ENCODE measurements at regions of chr16 and their contacts with region 1.

Region 1: DNA sequence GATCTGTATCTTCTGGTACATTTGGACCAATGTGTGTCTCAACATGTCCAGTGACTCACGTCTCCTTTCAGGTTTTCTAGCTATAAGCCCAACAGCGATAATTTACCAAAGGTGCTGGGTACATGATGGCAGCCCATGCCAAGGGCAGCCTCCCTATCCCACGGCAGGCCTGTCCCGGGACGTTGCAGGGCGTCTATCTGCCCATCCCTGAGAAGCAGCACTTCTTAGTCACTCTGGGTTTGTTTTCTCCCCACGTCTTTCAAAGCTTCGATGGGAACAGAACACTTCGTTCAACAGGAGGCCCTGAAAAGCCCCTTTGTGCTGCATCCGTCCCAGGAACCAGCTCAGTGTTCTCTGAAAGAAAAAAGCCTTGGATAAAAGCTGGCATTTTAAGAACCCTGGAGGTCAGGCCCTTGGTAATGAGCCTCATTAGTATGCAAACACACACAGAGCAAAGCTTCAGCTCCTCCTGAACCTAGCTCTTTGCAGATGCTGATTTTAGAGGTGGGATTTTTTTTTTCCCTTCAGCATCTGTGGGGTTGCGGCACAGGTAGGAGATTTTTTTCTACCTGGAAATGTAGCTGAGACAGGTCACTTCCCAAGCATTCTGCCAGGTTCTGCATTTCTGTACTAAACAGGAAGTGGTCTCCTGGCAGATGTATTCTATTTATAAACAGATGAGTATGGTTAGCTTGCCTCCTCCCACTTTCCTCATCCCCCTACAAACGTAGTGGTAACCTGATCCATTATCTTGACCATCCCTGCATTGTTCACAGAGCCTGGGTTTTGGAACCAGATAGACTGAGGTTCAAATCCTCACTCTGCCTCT is 17.5 kb upstream of the MT4 start:
- DNase-seq: peak; percentile 14 to 86 (median 74)
- H3K4me3 ChIP-seq: peak overlapping the region in 34 of 59 donors; percentile 3 to 46 (median 23)
- H3K27ac ChIP-seq: peak overlapping the region; percentile 85 to 100 (median 98)
- H3K27me3 ChIP-seq: no peaks in the 10 kb centered on the region
- CTCF ChIP-seq: peak in 3 of 56 donors; percentile 9 to 31 (median 17)

Region 2: DNA sequence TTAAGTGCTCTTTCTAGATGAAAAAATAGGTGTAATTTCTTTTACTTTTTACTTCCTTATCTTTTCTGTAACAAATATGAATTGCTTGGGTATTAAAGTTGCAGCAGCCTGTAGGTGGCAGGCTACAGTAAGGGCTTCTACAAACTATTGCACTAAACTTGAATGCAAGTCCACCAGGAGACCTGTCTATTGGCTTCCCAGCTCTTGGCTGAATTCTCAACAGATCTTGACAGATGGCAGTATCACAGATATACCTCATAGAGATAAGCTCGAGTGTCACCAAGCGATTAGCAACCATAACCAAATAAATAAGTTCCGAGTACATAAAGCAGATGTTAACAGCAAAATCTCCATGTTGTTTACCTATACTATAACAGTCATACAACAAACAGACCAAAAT is 33.4 kb before region 1 on chr16:
- intact Hi-C with region 1: loop called (anchors 1 to 2 kb)
- DNase-seq: peak in 5 of 10 donors; percentile 51 to 71 (median 59)
- H3K4me3 ChIP-seq: peak overlapping the region in 42 of 59 donors; percentile 5 to 100 (median 91)
- H3K27ac ChIP-seq: peak overlapping the region in 56 of 59 donors; percentile 20 to 100 (median 99)
- H3K27me3 ChIP-seq: no peaks in the 10 kb centered on the region
- CTCF ChIP-seq: peak; percentile 54 to 93 (median 78)

Region 3: GRCh38 chr16:56589141-56590039 is 42.1 kb after region 1 on chr16 and contains the start of gene MT3:
- intact Hi-C with region 1: loop called in 1 of 2 experiments (anchors 2 kb)
- DNase-seq: peak; percentile 84 to 93 (median 88)
- H3K4me3 ChIP-seq: peak within 1 kb of the TSS; percentile 51 to 94 (median 79)
- H3K27ac ChIP-seq: peak within 1 kb of the TSS; percentile 61 to 99 (median 95)
- H3K27me3 ChIP-seq: no peaks in the 10 kb centered on the region
- CTCF ChIP-seq: peak in 43 of 56 donors; percentile 6 to 61 (median 33)
- total RNA-seq, gene MT3: 739 to 2,436 (median 1,144) TPM